Cardiac septum (tissue), 1 donor: ENCODE measurements at regions of chr17 and their contacts with region 1.

Region 1: GRCh38 chr17:12020642-12021622 is at the start of gene MAP2K4:
- DNase-seq: peak; percentile 98
- total RNA-seq, gene MAP2K4: 32.5 TPM

Region 2: GRCh38 chr17:11899537-11899942 is 121.4 kb before region 1 on chr17:
- intact Hi-C with region 1: no loop called
- DNase-seq: no peak

Region 3: GRCh38 chr17:11997147-11997846 is 23.6 kb before region 1 on chr17 and contains the start of gene ZNF18:
- intact Hi-C with region 1: loop called (anchors 2 kb)
- DNase-seq: peak; percentile 99
- total RNA-seq, gene ZNF18: 4.3 TPM